ENCODE measurements at regions of chr5 and their contacts with region 1.

Region 1: DNA sequence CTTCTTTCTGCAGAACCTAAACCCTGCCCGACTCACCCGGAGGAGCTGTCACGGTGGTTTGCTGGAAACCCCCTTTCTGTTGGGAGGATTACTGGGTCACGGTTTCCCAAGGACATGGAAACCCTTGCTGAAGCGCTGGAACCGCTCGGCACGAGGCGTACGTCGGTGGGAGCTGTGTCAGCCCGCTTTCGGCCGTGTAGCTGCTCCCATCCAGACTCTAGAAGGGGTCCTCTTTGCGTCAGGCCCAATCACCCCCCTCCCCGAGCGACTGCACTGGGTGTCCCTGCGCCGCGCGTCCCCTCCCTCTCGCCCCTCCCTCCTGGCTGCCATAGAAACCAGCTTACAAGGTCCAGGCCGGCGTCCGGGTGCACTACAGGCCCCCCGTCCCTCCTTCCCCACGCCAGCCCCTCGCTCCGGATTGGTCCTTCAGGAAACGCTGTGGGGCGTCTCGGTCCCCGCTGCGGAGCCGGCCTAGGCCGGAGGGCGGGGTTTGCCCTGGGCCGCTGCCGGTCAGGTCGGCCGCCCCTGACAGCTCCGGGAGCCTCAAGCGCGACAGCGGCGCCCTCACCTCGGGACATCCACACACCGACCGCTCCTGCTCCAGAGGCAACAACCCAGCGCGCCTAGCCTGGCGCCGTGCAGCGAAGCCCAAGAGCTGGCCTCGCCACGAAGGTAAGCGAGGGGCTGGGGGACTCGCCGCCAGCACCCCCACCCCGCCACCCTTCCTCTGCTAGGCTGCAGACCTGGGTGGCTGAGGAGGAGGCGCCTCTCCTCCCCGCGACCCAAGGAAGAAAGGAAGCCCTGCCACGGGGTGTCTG is at the start of gene NIM1K:
- DNase-seq: peak; percentile 57
- H3K4me3 Mint-ChIP-seq: peak within 1 kb of the TSS; percentile 77
- H3K27ac Mint-ChIP-seq: peak within 1 kb of the TSS; percentile 56
- H3K4me1 Mint-ChIP-seq: peaks cover 25% of the 10 kb centered on the region
- H3K27me3 Mint-ChIP-seq: peaks cover 37% of the 10 kb centered on the region

Region 2: GRCh38 chr5:43305948-43306565 is 114.1 kb after region 1 on chr5:
- CTCF ChIA-PET with region 1: interaction called, 10 read pairs
- DNase-seq: no peak
- H3K4me3 Mint-ChIP-seq: no peak overlapping the region
- H3K27ac Mint-ChIP-seq: peak overlapping the region; percentile 50
- H3K4me1 Mint-ChIP-seq: peaks cover 77% of the 10 kb centered on the region
- H3K27me3 Mint-ChIP-seq: no peaks in the 10 kb centered on the region